ENCODE measurements at regions of chr3 and their contacts with region 1.

Region 1: GRCh38 chr3:128794770-128795649 is 69.0 kb downstream of the RAB7A start:
- DNase-seq: peak; percentile 26 to 81 (median 76)
- ATAC-seq: peak; percentile 98
- H3K4me3 ChIP-seq: no peak overlapping the region
- H3K4me3 Mint-ChIP-seq: peak overlapping the region; percentile 26 to 78 (median 51)
- H3K27ac ChIP-seq: peak overlapping the region; percentile 54
- H3K27ac Mint-ChIP-seq: peak overlapping the region; percentile 71 to 96 (median 85)
- H3K4me1 ChIP-seq: peaks cover 11 to 54% of the 10 kb centered on the region in 2 donors
- H3K4me1 Mint-ChIP-seq: peaks cover 32 to 74% (median 66%) of the 10 kb centered on the region in 7 donors
- H3K27me3 ChIP-seq: no peaks in the 10 kb centered on the region
- H3K27me3 Mint-ChIP-seq: no peaks in the 10 kb centered on the region

Region 2: GRCh38 chr3:128780101-128780837 is 14.7 kb before region 1 on chr3:
- CTCF ChIA-PET with region 1: interaction called, 56 read pairs
- POLR2A ChIA-PET with region 1: interaction called, 19 read pairs
- intact Hi-C with region 1: loop called in 1 of 2 experiments (anchors 1 kb)
- DNase-seq: no peak
- ATAC-seq: no peak
- H3K4me3 ChIP-seq: no peak overlapping the region
- H3K4me3 Mint-ChIP-seq: peak overlapping the region in 2 of 10 donors; percentile 2 to 54
- H3K27ac ChIP-seq: peak overlapping the region; percentile 22
- H3K27ac Mint-ChIP-seq: peak overlapping the region in 8 of 9 donors; percentile 44 to 96 (median 74)
- H3K4me1 ChIP-seq: peaks cover 0 to 30% of the 10 kb centered on the region in 2 donors
- H3K4me1 Mint-ChIP-seq: peaks cover 49 to 100% (median 90%) of the 10 kb centered on the region in 7 donors
- H3K27me3 ChIP-seq: no peaks in the 10 kb centered on the region
- H3K27me3 Mint-ChIP-seq: no peaks in the 10 kb centered on the region

Measured in naive thymus-derived CD4-positive, alpha-beta T cell (primary cell).